HepG2 (cell line): ENCODE measurements at regions of chr18 and their contacts with region 1.

Region 1: GRCh38 chr18:79136742-79137141 is 67.5 kb downstream of the ATP9B start:
- DNase-seq: no peak
- ATAC-seq: no peak
- H3K4me3 ChIP-seq: no peak overlapping the region
- H3K27ac ChIP-seq: no peak overlapping the region
- H3K4me1 ChIP-seq: peaks cover 11% of the 10 kb centered on the region; the same call in 1 of the 2 replicates
- H3K27me3 ChIP-seq: no peaks in the 10 kb centered on the region
- CTCF ChIP-seq: no peak
- EP300 ChIP-seq: no peak
- POLR2A ChIP-seq: no peak
- RAD21 ChIP-seq: no peak

Region 2: GRCh38 chr18:79156327-79156726 is 19.6 kb after region 1 on chr18:
- CTCF ChIA-PET with region 1: no interaction called
- POLR2A ChIA-PET with region 1: no interaction called
- in situ Hi-C with region 1: no loop called
- intact Hi-C with region 1: loop called (anchors 2 kb)
- DNase-seq: no peak
- ATAC-seq: no peak; the same call in 2 of the 3 replicates
- H3K4me3 ChIP-seq: no peak overlapping the region
- H3K27ac ChIP-seq: no peak overlapping the region
- H3K4me1 ChIP-seq: peaks cover 12% of the 10 kb centered on the region
- H3K27me3 ChIP-seq: no peaks in the 10 kb centered on the region
- CTCF ChIP-seq: no peak
- EP300 ChIP-seq: no peak
- POLR2A ChIP-seq: no peak
- RAD21 ChIP-seq: no peak

Region 3: DNA sequence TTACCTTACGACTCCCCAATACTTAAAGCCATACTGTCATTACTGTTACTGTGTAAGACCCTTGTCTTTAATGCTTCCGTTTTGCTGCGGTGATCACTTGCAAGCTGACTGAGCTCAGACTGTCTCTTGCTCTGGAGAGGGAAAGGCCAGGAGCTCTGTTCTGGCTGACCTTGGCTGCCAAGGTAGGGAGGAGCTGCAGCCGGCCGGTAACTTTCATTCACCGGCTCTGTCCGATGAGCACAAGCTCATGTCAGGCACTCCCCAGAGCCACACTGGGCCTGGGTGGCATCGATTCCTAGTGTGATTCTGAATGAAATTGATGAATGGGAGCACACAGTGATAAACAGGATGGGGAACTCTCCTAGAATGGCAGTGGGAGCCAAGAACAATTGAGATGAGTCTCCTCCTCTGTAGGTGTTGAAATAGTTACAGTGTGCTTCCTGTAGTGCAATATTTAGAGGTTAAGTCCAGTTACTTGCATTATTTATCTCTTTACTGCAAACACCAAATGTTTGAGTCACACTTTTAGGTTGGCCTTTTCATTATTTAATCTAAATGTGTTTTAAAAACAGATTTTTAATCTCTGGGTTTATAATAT is 33.3 kb after region 1 on chr18:
- CTCF ChIA-PET with region 1: no interaction called
- POLR2A ChIA-PET with region 1: no interaction called
- in situ Hi-C with region 1: no loop called
- intact Hi-C with region 1: no loop called
- DNase-seq: peak; percentile 10
- ATAC-seq: peak; percentile 96
- H3K4me3 ChIP-seq: no peak overlapping the region
- H3K27ac ChIP-seq: no peak overlapping the region
- H3K4me1 ChIP-seq: 0 out of 2 replicates have a peak, but pooled peaks cover 7% of the 10 kb centered on the region
- H3K27me3 ChIP-seq: no peaks in the 10 kb centered on the region
- CTCF ChIP-seq: no peak
- EP300 ChIP-seq: no peak
- POLR2A ChIP-seq: no peak
- RAD21 ChIP-seq: no peak

Region 4: DNA sequence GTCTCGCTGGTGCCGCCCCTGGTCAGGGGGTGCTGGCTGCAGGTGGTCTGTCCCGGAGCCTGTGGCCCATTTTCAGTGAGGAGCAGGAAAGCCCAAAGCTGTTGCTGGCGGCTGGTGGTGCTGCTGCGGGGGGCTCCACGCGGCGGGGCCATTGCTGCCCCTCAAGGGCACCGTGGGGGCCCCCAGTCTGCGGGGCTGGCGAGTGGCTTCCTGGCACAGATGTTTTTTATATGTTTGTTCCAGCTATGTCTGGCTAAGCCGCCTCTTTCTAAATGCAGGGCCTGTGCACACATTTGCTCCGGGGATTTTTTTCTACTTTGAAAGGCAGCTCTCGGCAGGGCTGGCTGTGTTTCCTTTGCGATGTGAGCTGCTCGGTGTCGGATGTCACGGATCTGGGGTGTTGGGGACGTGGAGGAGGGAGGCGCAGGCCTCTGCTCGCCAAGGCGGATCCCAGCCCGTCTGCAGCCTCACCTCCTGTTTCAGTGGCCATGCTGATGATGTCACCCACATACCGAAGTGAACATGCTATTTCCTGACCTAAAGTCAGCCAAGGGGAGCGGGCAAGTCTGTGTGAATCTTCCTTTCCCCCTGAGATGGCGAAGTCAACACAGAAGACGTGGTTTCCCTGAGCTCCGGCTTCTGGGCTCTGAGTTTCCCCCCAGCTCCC is 430.9 kb after region 1 on chr18:
- CTCF ChIA-PET with region 1: no interaction called
- POLR2A ChIA-PET with region 1: no interaction called
- in situ Hi-C with region 1: no loop called
- intact Hi-C with region 1: no loop called
- DNase-seq: no peak
- ATAC-seq: no peak
- H3K4me3 ChIP-seq: no peak overlapping the region
- H3K27ac ChIP-seq: no peak overlapping the region
- H3K4me1 ChIP-seq: no peaks in the 10 kb centered on the region
- H3K27me3 ChIP-seq: peaks cover 4 to 30% of the 10 kb centered on the region in 2 experiments; a peak in 3 of 5 replicates
- CTCF ChIP-seq: no peak
- EP300 ChIP-seq: no peak
- POLR2A ChIP-seq: no peak
- RAD21 ChIP-seq: no peak

Region 5: GRCh38 chr18:79679111-79679872 is 542.5 kb after region 1 on chr18 and contains the start of gene CTDP1:
- CTCF ChIA-PET with region 1: no interaction called
- POLR2A ChIA-PET with region 1: no interaction called
- in situ Hi-C with region 1: no loop called
- intact Hi-C with region 1: no loop called
- DNase-seq: peak; percentile 97
- ATAC-seq: peak; percentile 93
- H3K4me3 ChIP-seq: peak within 1 kb of the TSS; percentile 74 to 90 (median 89)
- H3K27ac ChIP-seq: peak within 1 kb of the TSS; percentile 95
- H3K4me1 ChIP-seq: peaks cover 55% of the 10 kb centered on the region
- H3K27me3 ChIP-seq: no peaks in the 10 kb centered on the region; a peak in 1 of 5 replicates
- CTCF ChIP-seq: peak; percentile 46
- EP300 ChIP-seq: no peak; a peak in 1 of 4 replicates
- POLR2A ChIP-seq: peak in 1 of 2 experiments; percentile 32; a peak in 1 of 4 replicates
- RAD21 ChIP-seq: 0 out of 2 replicates have a peak, but pooled peaks have one; percentile 2
- total RNA-seq, gene CTDP1: 9.9 and 11.0 TPM in 2 replicates

Region 6: GRCh38 chr18:79797518-79798345 is 661.0 kb after region 1 on chr18 and contains the start of gene KCNG2:
- CTCF ChIA-PET with region 1: no interaction called
- POLR2A ChIA-PET with region 1: no interaction called
- in situ Hi-C with region 1: no loop called
- intact Hi-C with region 1: no loop called
- DNase-seq: no peak
- ATAC-seq: peak; percentile 64
- H3K4me3 ChIP-seq: peak within 1 kb of the TSS in 1 of 3 experiments; percentile 28; a peak in 1 of 6 replicates
- H3K27ac ChIP-seq: no peak within 1 kb of the TSS
- H3K4me1 ChIP-seq: peaks cover 33% of the 10 kb centered on the region
- H3K27me3 ChIP-seq: peaks cover 2 to 59% of the 10 kb centered on the region in 2 experiments; a peak in 4 of 5 replicates
- CTCF ChIP-seq: peak; percentile 63
- EP300 ChIP-seq: no peak
- POLR2A ChIP-seq: no peak
- RAD21 ChIP-seq: 0 out of 2 replicates have a peak, but pooled peaks have one; percentile 44
- total RNA-seq, gene KCNG2: not detected in 2 replicates